Right lobe of liver (tissue), 6 donors: ENCODE measurements at regions of chr11 and their contacts with region 1.

Region 1: DNA sequence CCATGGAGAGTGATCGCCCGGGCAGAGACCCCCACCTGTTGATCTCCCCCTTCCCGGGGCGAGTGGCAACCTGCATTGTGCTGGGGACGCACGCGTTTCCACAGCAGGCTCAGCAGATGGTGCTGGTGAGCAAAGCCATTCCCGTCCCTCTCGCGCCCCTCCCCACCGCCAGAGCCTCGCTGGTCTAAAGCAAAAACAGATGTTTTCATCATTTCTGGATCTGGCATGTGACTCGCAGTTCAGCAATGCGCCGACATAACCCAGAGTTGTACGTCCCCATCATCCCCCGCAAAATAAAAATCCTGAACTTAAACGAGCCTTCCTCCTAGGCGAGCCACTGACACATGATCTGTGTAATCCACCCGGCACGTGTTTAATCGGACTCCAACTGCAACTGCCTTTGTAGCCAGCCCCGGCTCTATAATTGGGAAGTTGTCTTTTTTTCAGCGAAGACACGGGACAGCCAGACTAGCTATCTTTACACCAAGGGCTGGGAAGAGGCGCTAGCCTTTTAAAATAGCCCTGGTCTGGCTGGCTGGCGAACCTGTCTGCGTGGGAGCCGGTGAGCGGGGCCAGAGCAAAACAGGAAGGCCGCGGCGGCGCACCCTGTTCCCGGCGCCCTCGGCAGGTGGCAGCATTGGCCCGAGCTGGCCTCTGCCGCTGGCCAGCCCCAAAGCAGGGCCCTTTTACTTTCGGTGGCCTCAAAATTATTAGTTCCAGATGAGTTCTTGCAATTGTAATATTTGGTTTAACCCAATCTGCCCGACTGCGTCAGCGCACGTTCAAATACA is 203.0 kb upstream of the SORL1-AS1 start:
- DNase-seq: peak; percentile 87 to 88 (median 87)
- ATAC-seq: peak; percentile 96 to 97 (median 96)
- H3K4me3 ChIP-seq: peak overlapping the region; percentile 22 to 50 (median 49)
- H3K27ac ChIP-seq: peak overlapping the region; percentile 62 to 74 (median 70)
- H3K4me1 ChIP-seq: peaks cover 0 to 4% (median 0%) of the 10 kb centered on the region in 4 donors
- H3K27me3 ChIP-seq: no peaks in the 10 kb centered on the region
- CTCF ChIP-seq: peak; percentile 81 to 92 (median 86)
- POLR2A ChIP-seq: no peak

Region 2: GRCh38 chr11:121553806-121554205 is 101.9 kb before region 1 on chr11:
- intact Hi-C with region 1: no loop called
- DNase-seq: peak; percentile 95 to 97 (median 96)
- ATAC-seq: peak; percentile 93 to 99 (median 94)
- H3K4me3 ChIP-seq: no peak overlapping the region
- H3K27ac ChIP-seq: peak overlapping the region; percentile 64 to 77 (median 75)
- H3K4me1 ChIP-seq: peaks cover 0 to 10% (median 5%) of the 10 kb centered on the region in 4 donors
- H3K27me3 ChIP-seq: no peaks in the 10 kb centered on the region
- CTCF ChIP-seq: no peak
- POLR2A ChIP-seq: peak; percentile 24

Region 3: DNA sequence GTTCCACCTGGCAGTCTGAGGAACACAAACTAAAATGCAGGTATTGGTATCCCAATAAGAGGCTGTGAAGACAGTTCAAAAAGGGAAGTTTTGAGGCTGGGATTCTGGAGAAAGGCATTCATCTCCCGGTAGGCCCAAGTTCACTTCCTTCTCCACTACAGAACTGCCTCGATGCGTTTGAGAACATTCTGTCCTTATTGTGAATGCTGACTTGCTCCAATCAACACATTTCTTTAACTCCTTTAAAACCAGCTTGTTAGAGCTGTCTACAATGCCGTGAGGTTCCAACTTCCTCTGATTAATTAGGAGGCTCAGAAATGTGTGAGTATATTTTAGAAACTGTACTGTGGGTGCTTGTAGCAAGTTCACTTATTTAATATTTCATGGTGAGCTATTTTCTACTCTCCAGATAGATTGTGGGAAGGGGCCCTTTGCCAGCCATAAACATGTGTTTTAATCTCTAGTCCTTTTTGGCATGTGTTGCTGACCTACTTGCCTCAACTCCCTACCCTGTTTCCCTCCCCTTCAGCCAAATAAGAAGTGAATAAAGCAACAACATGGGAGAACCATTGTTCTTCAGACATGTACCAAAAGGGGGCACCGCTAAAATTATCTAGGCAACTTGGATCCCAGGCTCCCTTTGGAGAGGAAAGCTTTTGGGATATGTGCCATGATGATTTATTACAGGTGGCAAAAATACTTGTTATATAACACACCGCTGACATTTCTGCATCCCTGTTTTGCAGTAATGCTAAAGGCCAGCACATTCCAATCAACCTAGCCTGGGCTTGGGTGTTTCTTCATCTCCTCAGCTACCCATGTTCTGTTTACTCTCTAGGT is 214.7 kb after region 1 on chr11:
- intact Hi-C with region 1: no loop called
- DNase-seq: no peak
- ATAC-seq: peak in 3 of 4 donors; percentile 20 to 46 (median 35)
- H3K4me3 ChIP-seq: no peak overlapping the region
- H3K27ac ChIP-seq: no peak overlapping the region
- H3K4me1 ChIP-seq: no peaks in the 10 kb centered on the region
- H3K27me3 ChIP-seq: no peaks in the 10 kb centered on the region
- CTCF ChIP-seq: peak in 1 of 4 donors; percentile 14
- POLR2A ChIP-seq: no peak

Region 4: GRCh38 chr11:122202951-122203456 is 547.3 kb after region 1 on chr11:
- intact Hi-C with region 1: loop called in 1 of 2 experiments (anchors 5 kb)
- DNase-seq: peak; percentile 66 to 74 (median 70)
- ATAC-seq: peak; percentile 88 to 93 (median 90)
- H3K4me3 ChIP-seq: no peak overlapping the region
- H3K27ac ChIP-seq: no peak overlapping the region
- H3K4me1 ChIP-seq: peaks cover 0 to 29% (median 8%) of the 10 kb centered on the region in 4 donors
- H3K27me3 ChIP-seq: no peaks in the 10 kb centered on the region
- CTCF ChIP-seq: peak; percentile 93 to 98 (median 96)
- POLR2A ChIP-seq: no peak

Region 5: DNA sequence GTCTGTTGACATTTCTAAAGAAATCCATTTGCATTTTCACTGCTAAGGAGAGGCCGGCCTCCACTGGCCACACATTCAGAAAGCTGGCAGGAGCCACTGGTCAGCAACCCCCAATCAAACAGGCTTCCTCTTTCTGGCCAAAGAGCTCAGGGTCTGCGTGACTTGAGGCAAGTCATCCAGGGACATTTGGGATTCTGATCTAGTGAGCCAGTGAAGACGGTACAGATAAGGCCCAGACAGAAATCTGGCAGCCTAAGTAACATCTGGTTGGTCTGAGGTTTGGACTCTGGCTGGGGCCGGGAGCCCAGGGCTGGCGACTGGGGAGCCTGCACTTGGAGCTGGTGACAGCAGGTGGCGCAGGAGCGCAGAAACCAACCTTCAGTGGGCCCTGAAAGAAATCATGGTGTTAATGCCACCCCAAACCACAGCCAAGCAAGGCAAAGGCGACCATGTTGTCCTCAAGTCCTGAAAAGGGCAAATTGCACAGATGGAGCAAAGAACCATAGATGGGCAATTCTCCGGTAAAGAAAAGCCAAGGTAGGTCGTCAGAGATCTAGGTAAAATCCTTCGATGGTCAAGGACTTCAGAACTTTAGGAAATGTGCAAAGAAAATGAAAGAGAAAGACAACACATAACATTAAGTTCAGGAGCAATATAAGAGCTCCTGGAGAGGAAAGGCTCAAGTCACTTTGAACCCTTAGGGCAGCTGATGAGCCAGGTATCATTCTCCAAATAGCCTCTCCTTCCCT is 559.7 kb after region 1 on chr11:
- intact Hi-C with region 1: loop called in 1 of 2 experiments (anchors 10 kb)
- DNase-seq: peak; percentile 76 to 88 (median 80)
- ATAC-seq: peak; percentile 99 to 100 (median 99)
- H3K4me3 ChIP-seq: no peak overlapping the region
- H3K27ac ChIP-seq: no peak overlapping the region
- H3K4me1 ChIP-seq: peaks cover 0 to 12% (median 2%) of the 10 kb centered on the region in 4 donors
- H3K27me3 ChIP-seq: no peaks in the 10 kb centered on the region
- CTCF ChIP-seq: peak; percentile 85 to 93 (median 90)
- POLR2A ChIP-seq: no peak

Region 6: GRCh38 chr11:122505304-122506006 is 849.7 kb after region 1 on chr11:
- intact Hi-C with region 1: loop called in 1 of 2 experiments (anchors 10 kb)
- DNase-seq: peak; percentile 72 to 77 (median 77)
- ATAC-seq: peak; percentile 100
- H3K4me3 ChIP-seq: no peak overlapping the region
- H3K27ac ChIP-seq: no peak overlapping the region
- H3K4me1 ChIP-seq: no peaks in the 10 kb centered on the region
- H3K27me3 ChIP-seq: no peaks in the 10 kb centered on the region
- CTCF ChIP-seq: peak; percentile 79 to 91 (median 86)
- POLR2A ChIP-seq: no peak